ENCODE measurements at regions of chr9 and their contacts with region 1.

Region 1: GRCh38 chr9:96777426-96777864 is 442 bp downstream of the ZNF510 start:
- DNase-seq: no peak
- H3K4me3 ChIP-seq: peak overlapping the region; percentile 77 to 92 (median 80)
- H3K27ac ChIP-seq: peak overlapping the region; percentile 69 to 89 (median 83)
- H3K4me1 ChIP-seq: peaks cover 10 to 36% (median 22%) of the 10 kb centered on the region in 6 donors
- H3K27me3 ChIP-seq: no peaks in the 10 kb centered on the region
- CTCF ChIP-seq: no peak
- POLR2A ChIP-seq: no peak

Region 2: DNA sequence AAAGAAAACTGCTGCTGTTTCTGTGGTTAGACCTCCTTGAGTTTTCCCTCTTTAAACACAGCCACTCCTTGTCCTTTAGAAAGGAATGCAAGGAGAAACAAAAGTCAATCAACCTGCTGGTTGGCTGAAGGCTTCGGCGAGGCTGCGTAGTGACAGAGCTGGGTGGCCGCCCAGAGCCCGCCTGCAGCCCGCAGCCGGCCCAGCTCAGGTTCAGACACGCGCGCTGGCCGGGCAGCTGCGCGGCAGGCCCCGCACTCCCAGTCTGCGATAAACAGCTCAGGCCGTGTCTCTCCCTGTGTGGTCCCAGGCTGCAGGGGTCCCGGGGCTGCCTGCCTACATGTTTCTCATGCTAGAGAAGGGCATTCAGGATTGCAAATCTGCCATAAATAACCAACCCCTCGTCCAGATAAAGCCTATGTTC is 590.8 kb before region 1 on chr9:
- intact Hi-C with region 1: no loop called
- DNase-seq: no peak
- H3K4me3 ChIP-seq: no peak overlapping the region
- H3K27ac ChIP-seq: no peak overlapping the region
- H3K4me1 ChIP-seq: no peaks in the 10 kb centered on the region
- H3K27me3 ChIP-seq: peaks cover 0 to 12% (median 0%) of the 10 kb centered on the region in 7 donors
- CTCF ChIP-seq: no peak
- POLR2A ChIP-seq: no peak

Region 3: GRCh38 chr9:96844040-96844439 is 66.6 kb after region 1 on chr9:
- intact Hi-C with region 1: loop called (anchors 10 kb)
- DNase-seq: no peak
- H3K4me3 ChIP-seq: no peak overlapping the region
- H3K27ac ChIP-seq: no peak overlapping the region
- H3K4me1 ChIP-seq: peaks cover 0 to 11% (median 2%) of the 10 kb centered on the region in 6 donors
- H3K27me3 ChIP-seq: no peaks in the 10 kb centered on the region
- CTCF ChIP-seq: no peak
- POLR2A ChIP-seq: no peak

Measured in spleen (tissue), 13 donors.